ENCODE measurements at regions of chr19 and their contacts with region 1.

Region 1: DNA sequence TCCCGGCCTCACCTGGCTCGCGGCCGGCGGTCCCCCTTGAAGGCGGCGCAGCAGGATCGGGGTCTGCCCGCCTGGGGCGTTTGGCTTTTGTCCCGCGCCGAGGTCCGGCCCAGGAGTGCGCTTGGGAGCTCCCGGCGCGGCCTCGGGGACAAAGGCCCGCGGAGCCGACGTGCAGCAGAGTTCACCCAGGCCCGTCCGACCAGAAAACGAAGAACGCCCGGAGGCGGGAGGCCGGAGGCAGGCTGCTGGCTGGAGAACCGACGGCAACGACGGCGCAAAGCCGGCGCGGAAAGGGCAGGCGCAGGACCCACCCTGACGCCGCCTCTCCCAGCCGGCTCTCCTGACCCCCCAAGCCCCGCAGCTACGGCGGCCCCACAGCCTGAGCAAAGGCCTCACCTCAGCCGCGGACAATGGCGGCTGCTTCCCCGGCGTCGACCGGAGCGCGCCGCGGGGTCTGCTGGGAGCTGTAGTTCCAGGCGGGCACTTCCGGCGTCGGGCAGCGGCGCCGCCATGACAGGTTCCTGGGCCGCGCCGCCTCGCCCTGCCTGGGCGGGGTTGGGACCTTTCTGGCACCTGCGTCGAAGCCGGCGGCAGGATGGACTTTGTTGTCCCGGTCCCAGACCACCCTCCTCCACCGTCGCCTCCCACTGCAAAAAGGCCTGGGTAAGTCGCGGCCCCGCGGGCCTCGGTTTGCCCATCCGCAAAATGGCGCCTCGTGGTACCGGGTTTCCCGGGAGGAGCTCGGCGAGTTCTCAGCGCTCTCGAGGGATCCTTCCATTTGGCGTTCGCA is at the start of gene ZNF606:
- DNase-seq: peak; percentile 89
- ATAC-seq: peak; percentile 97 to 99 (median 98)
- H3K4me3 ChIP-seq: peak within 1 kb of the TSS; percentile 69 to 100 (median 92)
- H3K27ac ChIP-seq: peak within 1 kb of the TSS; percentile 81 to 98 (median 94)
- H3K4me1 ChIP-seq: peaks cover 9 to 42% (median 27%) of the 10 kb centered on the region in 9 donors
- H3K27me3 ChIP-seq: no peaks in the 10 kb centered on the region
- CTCF ChIP-seq: no peak
- total RNA-seq, gene ZNF606: 9.4 to 19.1 (median 13.4) TPM

Region 2: GRCh38 chr19:57947208-57948134 is 55.1 kb before region 1 on chr19 and contains the start of gene ZNF256:
- intact Hi-C with region 1: loop called in 1 of 10 experiments (anchors 5 kb)
- DNase-seq: peak; percentile 96 to 98
- ATAC-seq: peak; percentile 97 to 100 (median 99)
- H3K4me3 ChIP-seq: peak within 1 kb of the TSS; percentile 79 to 98 (median 94)
- H3K27ac ChIP-seq: peak within 1 kb of the TSS; percentile 59 to 94 (median 88)
- H3K4me1 ChIP-seq: peaks cover 7 to 30% (median 19%) of the 10 kb centered on the region in 9 donors
- H3K27me3 ChIP-seq: no peaks in the 10 kb centered on the region
- CTCF ChIP-seq: peak; percentile 54 to 89 (median 78)
- total RNA-seq, gene ZNF256: 7.5 to 14.9 (median 11.4) TPM

Region 3: GRCh38 chr19:58059003-58059670 is 56.6 kb after region 1 on chr19 and contains the start of gene ZNF135:
- intact Hi-C with region 1: loop called in 1 of 10 experiments (anchors 2 kb)
- DNase-seq: peak; percentile 92 to 94
- ATAC-seq: peak; percentile 96 to 98 (median 98)
- H3K4me3 ChIP-seq: peak within 1 kb of the TSS; percentile 51 to 84 (median 72)
- H3K27ac ChIP-seq: peak within 1 kb of the TSS; percentile 84 to 99 (median 95)
- H3K4me1 ChIP-seq: peaks cover 0 to 25% (median 15%) of the 10 kb centered on the region in 9 donors
- H3K27me3 ChIP-seq: no peaks in the 10 kb centered on the region
- CTCF ChIP-seq: no peak
- total RNA-seq, gene ZNF135: 2.9 to 5.0 (median 3.9) TPM